ENCODE measurements at regions of chr16 and their contacts with region 1.

Region 1: GRCh38 chr16:71499775-71500364 is 10.7 kb upstream of the ZNF19 start:
- DNase-seq: no peak
- H3K4me3 ChIP-seq: no peak overlapping the region
- H3K27ac ChIP-seq: no peak overlapping the region
- H3K4me1 ChIP-seq: no peaks in the 10 kb centered on the region
- H3K27me3 ChIP-seq: no peaks in the 10 kb centered on the region
- CTCF ChIP-seq: peak; percentile 28 to 58 (median 35)
- POLR2A ChIP-seq: no peak

Region 2: GRCh38 chr16:71412270-71413160 is 87.4 kb before region 1 on chr16:
- intact Hi-C with region 1: loop called (anchors 2 kb)
- DNase-seq: no peak
- H3K4me3 ChIP-seq: no peak overlapping the region
- H3K27ac ChIP-seq: no peak overlapping the region
- H3K4me1 ChIP-seq: peaks cover 8% of the 10 kb centered on the region
- H3K27me3 ChIP-seq: no peaks in the 10 kb centered on the region
- CTCF ChIP-seq: peak; percentile 65 to 84 (median 79)
- POLR2A ChIP-seq: no peak

Measured in vagina (tissue), 2 donors.